ENCODE measurements at regions of chr5 and their contacts with region 1.

Region 1: DNA sequence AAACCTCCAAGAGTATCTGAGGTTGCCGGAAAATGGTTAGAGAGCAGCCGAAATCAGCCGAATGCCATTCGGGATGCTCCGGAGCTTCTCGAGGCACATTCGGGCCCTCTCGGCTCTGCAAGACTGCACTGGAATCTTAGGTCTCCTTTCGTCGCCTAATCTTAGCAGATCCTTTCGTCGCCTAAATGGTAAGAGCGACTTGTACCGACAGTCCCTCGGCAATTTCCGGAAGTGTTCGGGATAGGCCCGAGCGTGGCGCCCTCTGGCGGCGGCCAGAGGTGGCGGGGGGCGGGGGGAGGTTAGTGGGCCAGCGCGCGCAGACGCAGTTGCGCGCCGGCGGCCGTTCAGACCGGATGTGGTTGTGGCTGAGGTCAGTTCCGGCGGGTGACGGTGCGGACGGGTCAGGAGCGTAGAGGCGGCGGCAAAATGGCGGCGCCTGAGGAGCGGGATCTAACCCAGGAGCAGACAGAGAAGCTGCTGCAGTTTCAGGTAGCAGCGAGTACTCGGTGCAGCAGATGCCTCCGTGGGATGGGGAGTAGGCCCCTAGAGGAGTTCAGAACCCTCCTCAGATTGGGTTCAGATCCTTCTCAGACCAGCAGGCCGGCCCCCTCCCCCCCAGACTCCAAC is at the start of gene FAF2:
- DNase-seq: peak; percentile 98
- H3K4me3 ChIP-seq: peak within 1 kb of the TSS; percentile 100
- H3K27me3 ChIP-seq: no peaks in the 10 kb centered on the region
- CTCF ChIP-seq: peak; percentile 90
- polyA plus RNA-seq, gene FAF2: 36.9 and 52.2 TPM in 2 replicates

Region 2: GRCh38 chr5:175809531-175810121 is 638.5 kb before region 1 on chr5:
- CTCF ChIA-PET with region 1: no interaction called
- POLR2A ChIA-PET with region 1: no interaction called
- DNase-seq: peak; percentile 86
- H3K4me3 ChIP-seq: no peak overlapping the region
- H3K27me3 ChIP-seq: peaks cover 5% of the 10 kb centered on the region
- CTCF ChIP-seq: no peak

Region 3: DNA sequence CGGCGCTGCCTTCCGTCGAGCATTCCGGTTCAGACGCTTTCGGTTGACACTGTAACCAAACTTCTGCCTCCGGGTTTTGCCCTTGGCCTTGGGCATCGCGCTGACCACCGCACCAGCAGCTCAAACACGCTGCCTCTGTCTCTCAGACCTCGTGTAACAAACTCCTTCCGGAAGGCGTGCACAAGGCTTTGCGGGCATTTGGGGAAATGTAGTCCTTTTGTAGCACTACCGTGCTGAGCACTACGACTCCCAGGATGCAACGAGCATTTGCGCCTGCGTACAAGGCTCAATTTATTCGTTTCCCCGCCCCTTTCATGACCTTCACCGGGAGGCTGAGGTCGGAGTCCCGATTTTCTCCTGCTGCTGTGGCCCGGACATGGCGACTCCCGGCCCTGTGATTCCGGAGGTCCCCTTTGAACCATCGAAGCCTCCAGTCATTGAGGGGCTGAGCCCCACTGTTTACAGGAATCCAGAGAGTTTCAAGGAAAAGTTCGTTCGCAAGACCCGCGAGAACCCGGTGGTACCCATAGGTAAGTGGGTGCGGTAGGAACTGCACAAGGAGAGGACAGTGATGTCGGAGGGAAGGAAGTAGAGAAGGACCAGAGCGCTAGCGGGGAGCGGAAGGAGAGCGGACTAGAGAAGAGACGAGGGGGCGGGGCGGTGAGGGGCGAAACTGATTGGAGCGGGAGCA is 59.5 kb before region 1 on chr5 and contains the starts of genes HIGD2A and NOP16:
- CTCF ChIA-PET with region 1: no interaction called
- POLR2A ChIA-PET with region 1: no interaction called
- DNase-seq: peak; percentile 92
- H3K4me3 ChIP-seq: peak within 1 kb of the TSS; percentile 77
- H3K27me3 ChIP-seq: no peaks in the 10 kb centered on the region
- CTCF ChIP-seq: no peak
- polyA plus RNA-seq, gene HIGD2A: 104 and 118 TPM in 2 replicates
- polyA plus RNA-seq, gene NOP16: 35.9 and 36.8 TPM in 2 replicates

Region 4: GRCh38 chr5:176436661-176437071 is 11.4 kb before region 1 on chr5:
- CTCF ChIA-PET with region 1: interaction called, 12 read pairs
- POLR2A ChIA-PET with region 1: no interaction called
- DNase-seq: no peak
- H3K4me3 ChIP-seq: no peak overlapping the region
- H3K27me3 ChIP-seq: peaks cover 9% of the 10 kb centered on the region; the same call in 1 of the 2 replicates
- CTCF ChIP-seq: no peak

Region 5: DNA sequence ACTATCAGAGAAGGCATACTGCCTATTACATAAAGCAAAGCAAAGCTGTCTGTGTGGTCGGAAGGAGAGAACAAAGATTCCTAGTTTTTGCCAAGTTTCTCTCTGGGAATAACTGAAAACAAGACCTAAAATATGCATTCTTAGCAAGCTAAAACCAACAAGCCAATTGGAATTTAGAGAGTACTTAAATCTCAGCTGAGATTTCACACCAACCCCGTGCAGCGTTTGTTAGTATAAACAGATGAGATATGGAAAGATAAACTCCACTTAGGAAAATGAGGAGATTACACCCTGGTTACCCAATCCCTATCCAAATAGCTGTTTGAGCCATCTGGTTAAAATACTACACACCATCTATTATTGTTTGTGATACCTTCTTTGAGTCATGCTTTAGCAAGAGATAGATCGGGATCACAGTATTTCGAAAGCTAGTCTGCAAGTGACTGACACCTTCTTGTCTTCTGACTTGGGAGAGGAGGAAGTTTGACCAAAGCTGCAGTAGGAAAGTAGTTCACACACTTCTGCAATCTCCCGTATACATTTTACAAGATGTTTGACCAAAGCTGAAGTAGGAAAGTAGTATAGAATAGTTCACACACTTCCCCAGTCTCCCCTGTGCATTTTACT is 18.3 kb after region 1 on chr5:
- CTCF ChIA-PET with region 1: interaction called, 10 read pairs
- POLR2A ChIA-PET with region 1: no interaction called
- DNase-seq: no peak
- H3K4me3 ChIP-seq: no peak overlapping the region
- H3K27me3 ChIP-seq: no peaks in the 10 kb centered on the region
- CTCF ChIP-seq: no peak